ENCODE measurements at regions of chr9 and their contacts with region 1.

Region 1: DNA sequence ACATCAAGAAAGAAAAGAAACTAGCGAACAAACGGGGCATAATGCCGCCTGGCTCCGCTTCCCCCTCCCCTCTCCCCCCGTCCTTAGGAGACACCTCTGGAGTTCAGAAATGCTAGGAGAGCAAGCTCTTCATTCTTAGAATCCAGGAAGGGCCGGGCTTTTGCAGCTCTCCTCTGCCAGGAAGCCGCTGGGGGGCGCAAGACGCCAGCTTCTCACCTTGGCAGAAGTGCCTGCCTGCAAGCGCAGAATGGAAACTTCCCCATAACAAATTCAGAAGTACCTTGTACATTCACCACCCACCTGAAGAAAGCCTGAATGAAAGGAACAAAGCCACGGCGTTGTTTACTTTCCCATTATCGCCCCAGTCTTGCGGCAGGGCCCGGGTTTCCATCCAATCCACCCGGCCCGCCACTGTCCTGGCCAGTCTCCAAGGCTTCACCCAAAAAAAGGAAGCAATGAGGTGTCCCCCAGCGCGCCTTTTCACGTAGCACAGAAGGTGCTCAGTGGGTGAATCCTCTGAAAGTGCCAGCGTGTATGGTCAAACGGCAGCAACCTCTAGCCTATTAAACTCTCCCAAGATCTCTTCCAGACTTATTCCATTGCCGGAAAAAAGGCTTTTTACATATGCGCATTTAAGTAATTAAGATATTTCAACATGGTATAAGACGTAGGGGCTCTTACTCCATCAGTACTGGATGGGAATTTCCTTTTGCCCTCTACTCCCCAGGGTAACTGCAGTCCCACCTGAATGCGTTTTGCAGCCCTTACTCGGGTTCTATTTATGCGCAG is 1.6 kb upstream of the GADD45G start:
- DNase-seq: peak; percentile 84 to 89
- H3K4me3 ChIP-seq: peak overlapping the region; percentile 41
- H3K4me3 Mint-ChIP-seq: peak overlapping the region; percentile 89
- H3K27ac Mint-ChIP-seq: no peak overlapping the region
- H3K4me1 ChIP-seq: peaks cover 9% of the 10 kb centered on the region; the same call in 1 of the 2 replicates
- H3K4me1 Mint-ChIP-seq: peaks cover 6% of the 10 kb centered on the region
- H3K27me3 ChIP-seq: no peaks in the 10 kb centered on the region
- H3K27me3 Mint-ChIP-seq: no peaks in the 10 kb centered on the region
- CTCF ChIP-seq: peak; percentile 68 to 78

Region 2: GRCh38 chr9:89632192-89632733 is 29.1 kb after region 1 on chr9:
- CTCF ChIA-PET with region 1: interaction called, 3 read pairs
- POLR2A ChIA-PET with region 1: interaction called, 4 read pairs
- intact Hi-C with region 1: loop called (anchors 2 kb)
- DNase-seq: peak in 1 of 2 experiments; percentile 44
- H3K4me3 ChIP-seq: no peak overlapping the region
- H3K4me3 Mint-ChIP-seq: no peak overlapping the region
- H3K27ac Mint-ChIP-seq: peak overlapping the region; percentile 62
- H3K4me1 ChIP-seq: peaks cover 6% of the 10 kb centered on the region; the same call in 1 of the 2 replicates
- H3K4me1 Mint-ChIP-seq: peaks cover 6% of the 10 kb centered on the region
- H3K27me3 ChIP-seq: no peaks in the 10 kb centered on the region
- H3K27me3 Mint-ChIP-seq: no peaks in the 10 kb centered on the region
- CTCF ChIP-seq: no peak

Region 3: DNA sequence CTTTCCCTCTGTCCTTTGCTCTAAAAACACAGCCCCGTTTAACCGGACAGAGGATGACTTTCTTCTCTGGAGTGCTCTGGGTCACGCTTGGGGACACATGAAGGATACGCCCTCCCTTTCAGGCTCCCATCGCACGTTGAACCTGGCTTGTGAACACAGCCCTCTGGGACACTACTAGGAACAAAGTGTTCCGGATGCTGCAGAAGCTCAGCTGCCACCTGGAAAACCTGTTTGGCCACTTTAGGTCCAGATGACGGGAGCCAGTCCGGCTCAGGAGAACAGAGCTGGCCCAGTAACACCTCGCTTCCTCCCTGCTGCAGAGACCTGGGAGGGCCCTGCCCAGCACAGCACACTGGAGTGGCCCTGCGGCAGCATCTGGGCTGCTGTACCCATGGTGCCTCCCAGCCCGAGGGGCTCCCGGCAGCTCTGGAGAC is 61.7 kb after region 1 on chr9:
- CTCF ChIA-PET with region 1: interaction called, 3 read pairs
- POLR2A ChIA-PET with region 1: interaction called, 5 read pairs
- intact Hi-C with region 1: loop called (anchors 5 kb)
- DNase-seq: peak; percentile 57 to 69
- H3K4me3 ChIP-seq: no peak overlapping the region
- H3K4me3 Mint-ChIP-seq: no peak overlapping the region
- H3K27ac Mint-ChIP-seq: no peak overlapping the region
- H3K4me1 ChIP-seq: peaks cover 40% of the 10 kb centered on the region
- H3K4me1 Mint-ChIP-seq: peaks cover 19% of the 10 kb centered on the region
- H3K27me3 ChIP-seq: no peaks in the 10 kb centered on the region
- H3K27me3 Mint-ChIP-seq: no peaks in the 10 kb centered on the region
- CTCF ChIP-seq: no peak

Region 4: DNA sequence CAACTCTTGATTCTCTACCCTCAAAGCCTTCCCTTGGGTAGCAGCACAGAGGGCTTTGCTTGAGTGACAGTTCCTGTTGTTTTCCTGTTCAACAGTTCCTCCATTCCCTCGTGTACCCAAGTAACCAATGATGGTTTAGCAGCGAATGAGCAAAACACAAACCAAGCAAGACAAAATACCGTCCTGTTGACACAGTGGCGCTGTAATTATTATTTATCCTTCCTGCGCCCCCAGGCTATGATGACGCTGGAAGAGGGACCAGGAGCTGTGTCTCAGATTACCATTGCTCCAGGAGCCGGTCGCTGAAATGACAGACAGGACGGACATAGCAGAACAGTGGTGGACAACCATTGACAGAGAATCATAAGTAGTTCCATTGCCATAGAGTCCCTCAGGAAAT is 156.4 kb after region 1 on chr9:
- CTCF ChIA-PET with region 1: no interaction called
- POLR2A ChIA-PET with region 1: no interaction called
- intact Hi-C with region 1: no loop called
- DNase-seq: peak in 1 of 2 experiments; percentile 40
- H3K4me3 ChIP-seq: no peak overlapping the region
- H3K4me3 Mint-ChIP-seq: no peak overlapping the region
- H3K27ac Mint-ChIP-seq: no peak overlapping the region
- H3K4me1 ChIP-seq: no peaks in the 10 kb centered on the region
- H3K4me1 Mint-ChIP-seq: no peaks in the 10 kb centered on the region
- H3K27me3 ChIP-seq: no peaks in the 10 kb centered on the region
- H3K27me3 Mint-ChIP-seq: no peaks in the 10 kb centered on the region
- CTCF ChIP-seq: no peak

Region 5: GRCh38 chr9:89808076-89808755 is 205.0 kb after region 1 on chr9:
- CTCF ChIA-PET with region 1: no interaction called
- POLR2A ChIA-PET with region 1: no interaction called
- intact Hi-C with region 1: loop called (anchors 10 kb)
- DNase-seq: no peak
- H3K4me3 ChIP-seq: no peak overlapping the region
- H3K4me3 Mint-ChIP-seq: no peak overlapping the region
- H3K27ac Mint-ChIP-seq: no peak overlapping the region
- H3K4me1 ChIP-seq: no peaks in the 10 kb centered on the region
- H3K4me1 Mint-ChIP-seq: no peaks in the 10 kb centered on the region
- H3K27me3 ChIP-seq: no peaks in the 10 kb centered on the region
- H3K27me3 Mint-ChIP-seq: no peaks in the 10 kb centered on the region
- CTCF ChIP-seq: no peak

Region 6: DNA sequence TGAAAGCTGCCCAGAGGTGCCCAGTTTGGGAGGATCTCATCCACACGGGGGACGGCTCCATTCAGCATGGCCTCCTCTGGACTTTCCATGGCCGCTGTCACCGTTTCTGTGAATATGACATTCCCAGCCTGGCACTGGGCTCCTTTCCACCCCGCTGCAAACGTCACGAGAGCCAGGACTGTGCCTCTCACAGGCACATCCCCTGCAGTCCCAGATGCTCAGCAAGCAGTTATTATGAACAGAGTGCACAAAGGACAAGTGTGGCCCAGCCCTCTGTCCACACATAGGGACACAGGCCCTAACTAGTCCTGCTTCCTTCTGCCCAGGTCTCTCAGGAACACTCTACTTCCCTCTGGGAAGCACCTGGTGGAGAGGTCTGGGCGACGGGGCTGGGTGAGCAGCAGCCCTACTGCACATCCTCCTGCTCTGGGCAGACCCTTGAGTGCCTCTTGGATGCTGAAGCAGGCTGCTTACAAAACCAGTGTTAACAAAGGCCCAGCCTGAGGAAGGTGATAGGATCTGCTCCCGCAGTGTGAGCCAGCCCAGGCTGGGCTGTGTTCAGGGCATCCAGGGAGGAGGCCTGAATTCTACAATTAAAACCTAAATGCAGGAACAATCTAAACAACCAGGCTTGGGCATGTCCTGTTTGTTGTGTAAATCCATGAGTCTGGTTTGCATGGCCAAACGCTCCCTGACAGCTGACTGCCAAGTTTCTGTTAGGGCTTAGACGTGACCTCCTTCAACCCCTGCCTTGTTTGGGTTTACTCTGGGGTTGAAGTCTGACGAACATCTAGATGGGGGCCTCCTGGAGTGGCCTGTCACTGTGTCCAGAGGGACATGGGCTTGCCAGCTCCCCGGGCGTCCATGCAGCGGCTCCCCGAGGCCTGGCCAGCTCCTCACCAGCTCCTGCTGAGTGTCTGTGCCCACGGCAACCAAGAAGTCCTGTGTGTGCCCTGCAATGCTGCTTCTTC is 271.5 kb after region 1 on chr9:
- CTCF ChIA-PET with region 1: no interaction called
- POLR2A ChIA-PET with region 1: no interaction called
- intact Hi-C with region 1: no loop called
- DNase-seq: no peak
- H3K4me3 ChIP-seq: no peak overlapping the region
- H3K4me3 Mint-ChIP-seq: no peak overlapping the region
- H3K27ac Mint-ChIP-seq: no peak overlapping the region
- H3K4me1 ChIP-seq: no peaks in the 10 kb centered on the region
- H3K4me1 Mint-ChIP-seq: peaks cover 4% of the 10 kb centered on the region
- H3K27me3 ChIP-seq: no peaks in the 10 kb centered on the region
- H3K27me3 Mint-ChIP-seq: no peaks in the 10 kb centered on the region
- CTCF ChIP-seq: no peak

Region 7: DNA sequence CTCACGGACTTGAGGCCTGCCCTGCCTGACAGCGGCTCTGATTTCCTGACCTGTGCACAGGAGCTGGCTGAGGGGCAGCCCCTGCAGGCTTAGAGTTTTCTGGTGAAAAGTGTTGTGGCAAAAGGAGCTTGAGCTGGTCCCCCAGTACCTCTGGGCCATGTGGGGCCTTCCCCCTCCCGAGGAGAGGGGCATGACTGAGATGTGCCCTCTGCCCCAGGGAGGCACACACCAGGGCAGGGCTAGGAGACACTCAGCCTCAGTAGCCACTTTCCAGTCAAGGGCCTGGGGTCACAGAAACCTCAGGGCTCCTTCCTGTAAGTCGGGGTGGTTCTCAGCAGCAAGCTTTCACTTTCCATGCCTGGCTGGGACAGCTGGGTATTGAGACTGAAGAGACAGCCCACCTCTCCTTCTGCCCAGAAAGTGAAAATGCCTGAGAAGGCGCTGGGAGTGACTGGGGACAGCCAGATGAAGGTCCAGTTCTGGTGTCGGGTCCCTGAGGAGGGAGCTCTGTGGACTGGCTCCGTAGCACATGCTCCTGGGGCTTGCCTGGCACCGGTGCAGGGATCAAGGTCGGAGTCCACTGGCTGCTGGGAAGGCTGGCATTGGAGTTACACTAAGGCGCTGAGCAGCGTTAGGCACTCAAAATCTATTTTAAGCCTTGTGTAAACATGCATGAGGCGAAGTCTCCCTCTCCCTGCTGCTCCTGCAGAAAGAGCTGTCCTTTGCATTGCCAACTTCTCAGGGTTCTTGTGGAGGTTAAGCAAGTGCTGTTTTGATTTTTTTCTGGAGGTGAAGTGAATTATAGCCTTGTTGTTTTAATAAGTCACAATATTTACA is 396.6 kb after region 1 on chr9:
- CTCF ChIA-PET with region 1: interaction called, 7 read pairs
- POLR2A ChIA-PET with region 1: no interaction called
- intact Hi-C with region 1: loop called (anchors 1 kb)
- DNase-seq: peak; percentile 37 to 52
- H3K4me3 ChIP-seq: no peak overlapping the region
- H3K4me3 Mint-ChIP-seq: peak overlapping the region; percentile 38
- H3K27ac Mint-ChIP-seq: peak overlapping the region; percentile 35
- H3K4me1 ChIP-seq: peaks cover 26% of the 10 kb centered on the region
- H3K4me1 Mint-ChIP-seq: peaks cover 11% of the 10 kb centered on the region
- H3K27me3 ChIP-seq: no peaks in the 10 kb centered on the region
- H3K27me3 Mint-ChIP-seq: no peaks in the 10 kb centered on the region
- CTCF ChIP-seq: no peak